Endothelial cell of umbilical vein (primary cell): ENCODE measurements at regions of chr16 and their contacts with region 1.

Region 1: GRCh38 chr16:57084257-57084770 is 8.1 kb upstream of the CPNE2 start:
- DNase-seq: peak; percentile 79
- H3K4me3 ChIP-seq: no peak overlapping the region
- H3K27ac ChIP-seq: no peak overlapping the region
- H3K4me1 ChIP-seq: no peaks in the 10 kb centered on the region
- H3K27me3 ChIP-seq: no peaks in the 10 kb centered on the region
- CTCF ChIP-seq: peak; percentile 95 to 98
- POLR2A ChIP-seq: no peak

Region 2: GRCh38 chr16:56911771-56912571 is 172.3 kb before region 1 on chr16:
- CTCF ChIA-PET with region 1: no interaction called
- POLR2A ChIA-PET with region 1: no interaction called
- dilution Hi-C with region 1: no loop called
- intact Hi-C with region 1: no loop called
- DNase-seq: no peak
- H3K4me3 ChIP-seq: no peak overlapping the region
- H3K27ac ChIP-seq: no peak overlapping the region
- H3K4me1 ChIP-seq: peaks cover 17% of the 10 kb centered on the region
- H3K27me3 ChIP-seq: peaks cover 0 to 3% of the 10 kb centered on the region in 2 experiments
- CTCF ChIP-seq: no peak
- POLR2A ChIP-seq: no peak

Region 3: GRCh38 chr16:57100445-57100844 is 16.1 kb after region 1 on chr16:
- CTCF ChIA-PET with region 1: interaction called, 11 read pairs
- POLR2A ChIA-PET with region 1: no interaction called
- dilution Hi-C with region 1: no loop called
- intact Hi-C with region 1: no loop called
- DNase-seq: no peak
- H3K4me3 ChIP-seq: no peak overlapping the region
- H3K27ac ChIP-seq: no peak overlapping the region
- H3K4me1 ChIP-seq: no peaks in the 10 kb centered on the region
- H3K27me3 ChIP-seq: no peaks in the 10 kb centered on the region
- CTCF ChIP-seq: no peak
- POLR2A ChIP-seq: no peak

Region 4: DNA sequence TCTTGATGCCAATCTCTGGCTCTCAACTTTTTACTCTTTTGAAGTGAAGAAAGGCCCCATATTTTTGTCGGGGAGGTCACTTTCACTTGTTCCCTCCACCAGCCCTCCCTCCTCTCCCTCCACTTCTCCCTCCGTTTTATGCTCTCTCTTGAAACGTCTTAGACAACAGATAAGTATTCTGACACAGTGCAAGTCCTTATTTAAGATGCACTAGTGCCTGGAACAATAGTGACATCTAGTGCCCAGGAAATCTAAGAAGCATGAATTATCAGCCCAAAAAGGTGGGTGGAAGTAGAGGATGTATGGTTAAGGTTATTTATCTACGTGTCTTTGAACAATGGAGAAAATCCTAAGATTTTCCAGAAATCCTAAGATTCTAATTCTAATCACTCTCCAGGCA is 83.6 kb after region 1 on chr16:
- CTCF ChIA-PET with region 1: interaction called, 31 read pairs
- POLR2A ChIA-PET with region 1: no interaction called
- dilution Hi-C with region 1: no loop called
- intact Hi-C with region 1: loop called (anchors 1 kb)
- DNase-seq: peak; percentile 83
- H3K4me3 ChIP-seq: no peak overlapping the region
- H3K27ac ChIP-seq: no peak overlapping the region
- H3K4me1 ChIP-seq: no peaks in the 10 kb centered on the region
- H3K27me3 ChIP-seq: no peaks in the 10 kb centered on the region
- CTCF ChIP-seq: peak; percentile 50 to 51
- POLR2A ChIP-seq: no peak